GM13976 (cell line): ENCODE measurements at regions of chr7 and their contacts with region 1.

Region 1: GRCh38 chr7:44921607-44922359 is 36.5 kb upstream of the PURB start:
- DNase-seq: peak; percentile 88
- CTCF ChIP-seq: peak; percentile 89

Region 2: GRCh38 chr7:44867073-44867995 is 54.4 kb before region 1 on chr7:
- in situ Hi-C with region 1: loop called (anchors 10 kb)
- DNase-seq: no peak
- CTCF ChIP-seq: no peak

Region 3: GRCh38 chr7:45564485-45564884 is 642.7 kb after region 1 on chr7:
- in situ Hi-C with region 1: no loop called
- DNase-seq: no peak
- CTCF ChIP-seq: no peak